GM18951 (cell line): ENCODE measurements at regions of chr6 and their contacts with region 1.

Region 1: DNA sequence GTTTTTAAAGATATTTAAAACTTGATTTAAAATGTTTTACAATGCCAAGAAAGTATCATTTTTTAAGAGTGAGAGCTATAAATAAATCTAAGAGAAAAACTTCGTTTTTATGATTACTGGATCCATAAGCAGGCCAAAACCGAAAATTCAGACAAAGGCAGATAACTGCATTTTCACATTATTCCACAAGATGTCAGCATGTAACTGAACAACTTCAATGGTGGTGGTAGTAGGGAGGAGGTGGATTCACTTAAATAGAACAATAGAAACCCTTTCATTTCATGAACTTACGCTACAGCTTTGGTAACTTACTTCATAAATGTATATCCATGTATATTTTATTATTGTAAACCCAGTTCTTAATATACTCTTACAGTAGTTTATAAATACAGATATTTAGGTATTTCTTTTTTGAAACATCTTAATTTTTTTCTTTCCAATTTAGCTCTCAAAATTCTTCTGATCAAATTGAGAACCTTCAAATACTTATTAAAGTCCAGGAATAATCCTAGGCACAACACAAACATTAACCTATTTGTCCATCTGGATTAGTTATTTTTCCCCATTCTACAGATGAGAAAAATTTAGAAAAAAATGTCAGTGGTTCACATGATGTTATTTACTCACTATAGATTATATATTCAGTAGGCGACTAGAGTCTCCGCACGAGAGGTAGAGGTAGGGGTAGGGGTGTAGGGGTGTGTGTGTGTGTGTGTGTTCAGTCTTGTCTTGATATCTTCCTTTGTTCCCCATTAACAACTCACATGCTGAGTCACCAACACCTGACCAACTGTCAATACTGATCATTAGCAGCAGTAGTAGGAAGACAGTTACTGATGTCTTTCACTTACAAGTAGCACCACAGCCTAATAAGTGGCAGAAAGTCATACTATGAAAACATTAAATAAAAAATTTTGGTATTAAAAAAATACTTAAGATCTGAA is 111.5 kb downstream of the ARHGAP18 start:
- POLR2A ChIP-seq: no peak

Region 2: GRCh38 chr6:129730477-129731165 is 132.1 kb after region 1 on chr6:
- in situ Hi-C with region 1: loop called (anchors 10 kb)
- POLR2A ChIP-seq: no peak